Psoas muscle (tissue), 8 donors: ENCODE measurements at regions of chr2 and their contacts with region 1.

Region 1: DNA sequence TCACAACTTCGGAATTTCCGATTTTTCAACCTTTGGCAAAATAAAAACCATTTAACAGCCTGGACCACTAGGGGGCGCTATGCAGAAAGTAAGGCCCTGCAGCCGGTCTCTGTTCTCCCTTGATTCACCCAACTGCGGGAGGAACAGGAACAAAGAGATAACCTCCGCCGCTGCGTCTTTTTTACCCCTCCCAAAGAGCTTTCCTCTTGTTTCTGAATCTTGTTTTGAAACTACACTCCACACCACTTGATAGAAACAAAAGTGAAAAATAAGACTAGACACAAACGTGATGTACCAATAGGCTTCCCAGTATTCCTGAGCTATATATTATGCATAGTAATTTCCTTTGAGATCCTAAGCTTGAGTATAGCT is 231.2 kb downstream of the MYO3B start:
- DNase-seq: peak; percentile 43 to 66
- ATAC-seq: peak in 2 of 4 donors; percentile 49 to 63
- H3K4me3 ChIP-seq: no peak overlapping the region
- H3K27ac ChIP-seq: no peak overlapping the region
- H3K4me1 ChIP-seq: no peaks in the 10 kb centered on the region
- H3K27me3 ChIP-seq: no peaks in the 10 kb centered on the region
- CTCF ChIP-seq: peak; percentile 87

Region 2: DNA sequence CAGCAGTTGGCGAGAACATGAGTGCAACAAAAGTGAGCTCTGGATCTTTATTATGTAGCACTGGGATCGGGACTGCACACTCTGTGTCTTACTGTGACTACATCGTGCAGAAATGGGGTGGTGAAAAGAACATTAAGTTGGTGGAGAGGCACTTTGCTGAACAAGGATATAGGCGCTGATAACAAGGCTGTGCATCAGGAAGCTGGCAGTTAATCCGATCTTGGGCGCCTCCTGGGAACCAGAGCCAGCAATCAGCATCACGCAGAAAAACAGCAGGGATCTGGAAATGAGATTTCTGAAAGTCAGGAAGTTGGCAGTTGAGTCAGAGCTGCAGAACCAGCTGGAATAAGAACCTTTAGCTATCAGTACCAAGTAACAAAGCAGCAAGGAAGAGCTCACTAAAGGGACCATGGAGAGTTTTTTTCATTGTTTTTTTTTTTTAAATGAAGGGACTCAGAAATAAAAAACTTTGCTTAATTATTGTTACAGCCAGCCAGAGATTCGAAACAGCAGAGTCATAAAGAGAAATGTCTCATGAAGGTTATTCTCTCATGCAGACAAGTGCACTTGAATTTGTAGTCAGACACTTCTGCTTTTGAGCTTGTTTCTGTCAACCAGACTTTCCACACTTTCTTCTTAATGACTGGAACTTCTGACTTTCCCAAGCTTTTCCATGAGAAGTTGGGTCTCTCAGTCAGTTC is 254.0 kb before region 1 on chr2:
- intact Hi-C with region 1: no loop called
- DNase-seq: no peak
- ATAC-seq: no peak
- H3K4me3 ChIP-seq: no peak overlapping the region
- H3K27ac ChIP-seq: no peak overlapping the region
- H3K4me1 ChIP-seq: no peaks in the 10 kb centered on the region
- H3K27me3 ChIP-seq: no peaks in the 10 kb centered on the region
- CTCF ChIP-seq: no peak

Region 3: GRCh38 chr2:170332676-170333402 is 76.3 kb before region 1 on chr2:
- intact Hi-C with region 1: no loop called
- DNase-seq: no peak
- ATAC-seq: no peak
- H3K4me3 ChIP-seq: no peak overlapping the region
- H3K27ac ChIP-seq: no peak overlapping the region
- H3K4me1 ChIP-seq: no peaks in the 10 kb centered on the region
- H3K27me3 ChIP-seq: no peaks in the 10 kb centered on the region
- CTCF ChIP-seq: no peak

Region 4: DNA sequence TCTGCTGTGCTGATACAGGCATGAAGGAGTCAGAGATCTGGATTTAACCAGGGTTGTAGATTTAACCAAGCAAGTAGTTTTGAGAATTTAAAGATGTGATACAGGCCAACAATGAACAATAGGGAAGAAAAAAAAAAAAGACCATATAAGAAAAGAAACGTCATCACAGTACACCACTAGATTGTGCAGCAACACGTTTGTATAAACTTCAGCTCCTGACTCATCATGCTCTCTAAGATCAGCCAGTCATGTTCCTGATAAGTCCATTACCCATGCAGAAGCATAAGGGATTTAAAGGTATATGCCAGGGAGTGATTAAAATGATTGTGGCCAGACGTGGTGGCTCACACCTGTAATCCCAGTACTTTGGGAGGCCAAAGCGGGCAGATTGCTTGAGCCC is 338.8 kb after region 1 on chr2:
- intact Hi-C with region 1: loop called in 1 of 2 experiments (anchors 10 kb)
- DNase-seq: no peak
- ATAC-seq: no peak
- H3K4me3 ChIP-seq: no peak overlapping the region
- H3K27ac ChIP-seq: no peak overlapping the region
- H3K4me1 ChIP-seq: no peaks in the 10 kb centered on the region
- H3K27me3 ChIP-seq: no peaks in the 10 kb centered on the region
- CTCF ChIP-seq: no peak

Region 5: DNA sequence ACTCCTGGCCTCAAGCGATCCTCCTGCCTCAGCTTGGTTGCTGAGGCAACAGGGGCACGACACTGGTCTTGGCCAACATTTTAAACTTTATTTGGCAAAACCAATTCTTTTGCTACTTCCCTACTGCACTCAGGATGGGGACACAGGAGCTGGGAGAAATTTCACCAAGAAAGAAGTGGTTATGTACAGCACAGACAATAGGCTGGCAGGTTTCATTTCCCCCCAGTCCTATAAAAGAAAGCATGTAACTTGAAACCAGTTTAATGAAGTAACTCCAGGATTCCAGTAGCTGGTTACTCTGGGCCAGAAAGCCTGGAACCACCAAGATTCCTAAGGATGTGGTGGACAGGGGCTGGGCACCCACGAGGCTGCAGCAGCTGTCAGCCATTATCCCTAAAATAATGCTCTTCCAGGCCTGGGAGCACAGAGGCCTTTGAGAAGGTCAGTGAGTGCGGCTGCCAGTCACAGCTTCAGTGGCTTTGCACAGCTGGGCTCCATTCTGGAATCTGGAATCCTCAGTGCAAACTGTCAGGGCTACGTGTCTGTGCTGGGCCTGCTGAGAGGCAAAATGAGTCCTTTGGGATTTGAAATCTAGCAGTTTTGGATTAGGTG is 1876.0 kb after region 1 on chr2:
- intact Hi-C with region 1: loop called in 1 of 2 experiments (anchors 5 kb)
- DNase-seq: no peak
- ATAC-seq: peak; percentile 52 to 70 (median 56)
- H3K4me3 ChIP-seq: no peak overlapping the region
- H3K27ac ChIP-seq: peak overlapping the region; percentile 72
- H3K4me1 ChIP-seq: peaks cover 26% of the 10 kb centered on the region
- H3K27me3 ChIP-seq: no peaks in the 10 kb centered on the region
- CTCF ChIP-seq: no peak